ENCODE measurements at regions of chr17 and their contacts with region 1.

Region 1: DNA sequence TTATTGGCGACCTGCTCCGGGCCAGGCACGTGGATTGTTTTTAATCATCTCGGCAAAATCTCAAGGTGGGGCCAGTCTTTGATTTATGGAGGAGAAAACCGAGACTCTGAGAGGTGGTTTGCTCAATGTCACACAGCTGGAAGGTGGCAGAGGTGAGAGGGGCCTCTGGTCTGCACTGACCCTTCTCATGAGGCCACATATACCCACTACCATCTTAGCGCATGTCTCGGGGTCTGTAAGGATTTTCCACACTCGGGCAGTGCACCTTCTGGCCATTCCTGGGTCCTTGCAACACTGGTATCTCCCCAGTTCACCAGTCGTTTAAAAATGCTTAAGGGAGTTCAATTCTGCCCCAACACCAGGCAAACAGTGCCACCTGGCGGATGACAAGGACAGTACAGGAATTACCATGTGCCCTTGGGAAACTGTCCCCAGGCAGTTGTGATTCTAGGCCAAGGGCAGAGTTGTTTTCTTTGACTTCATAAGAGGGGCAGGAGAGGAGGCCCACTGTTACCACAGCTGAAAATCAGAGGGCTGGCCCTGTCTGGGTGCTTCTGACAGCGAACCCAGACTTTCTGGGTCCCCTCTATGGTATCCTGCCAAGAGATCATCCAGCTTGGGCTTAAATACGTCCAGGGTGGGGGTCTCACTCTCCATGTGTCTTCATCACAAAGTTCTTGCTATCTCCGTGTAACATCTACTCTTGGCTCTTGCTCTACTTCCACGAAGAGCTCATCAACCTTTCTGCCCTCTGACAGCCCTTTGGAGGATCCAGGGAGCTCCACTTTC is 39.4 kb upstream of the RAI1 start:
- DNase-seq: peak; percentile 49 to 84 (median 72)
- ATAC-seq: peak; percentile 91
- H3K4me3 ChIP-seq: no peak overlapping the region
- H3K4me3 Mint-ChIP-seq: no peak overlapping the region
- H3K27ac ChIP-seq: no peak overlapping the region
- H3K27ac Mint-ChIP-seq: peak overlapping the region in 1 of 9 donors; percentile 65
- H3K4me1 ChIP-seq: no peaks in the 10 kb centered on the region
- H3K4me1 Mint-ChIP-seq: peaks cover 0 to 5% (median 0%) of the 10 kb centered on the region in 7 donors
- H3K27me3 ChIP-seq: no peaks in the 10 kb centered on the region
- H3K27me3 Mint-ChIP-seq: peaks cover 0 to 2% (median 0%) of the 10 kb centered on the region in 5 donors

Region 2: GRCh38 chr17:17440010-17440843 is 201.6 kb before region 1 on chr17:
- CTCF ChIA-PET with region 1: interaction called, 6 read pairs
- POLR2A ChIA-PET with region 1: no interaction called
- intact Hi-C with region 1: loop called in 1 of 2 experiments (anchors 1 kb)
- DNase-seq: peak; percentile 49 to 79 (median 63)
- ATAC-seq: peak; percentile 79
- H3K4me3 ChIP-seq: no peak overlapping the region
- H3K4me3 Mint-ChIP-seq: no peak overlapping the region
- H3K27ac ChIP-seq: no peak overlapping the region
- H3K27ac Mint-ChIP-seq: peak overlapping the region in 2 of 9 donors; percentile 56 to 76
- H3K4me1 ChIP-seq: no peaks in the 10 kb centered on the region
- H3K4me1 Mint-ChIP-seq: peaks cover 0 to 9% (median 7%) of the 10 kb centered on the region in 7 donors
- H3K27me3 ChIP-seq: no peaks in the 10 kb centered on the region
- H3K27me3 Mint-ChIP-seq: no peaks in the 10 kb centered on the region

Region 3: DNA sequence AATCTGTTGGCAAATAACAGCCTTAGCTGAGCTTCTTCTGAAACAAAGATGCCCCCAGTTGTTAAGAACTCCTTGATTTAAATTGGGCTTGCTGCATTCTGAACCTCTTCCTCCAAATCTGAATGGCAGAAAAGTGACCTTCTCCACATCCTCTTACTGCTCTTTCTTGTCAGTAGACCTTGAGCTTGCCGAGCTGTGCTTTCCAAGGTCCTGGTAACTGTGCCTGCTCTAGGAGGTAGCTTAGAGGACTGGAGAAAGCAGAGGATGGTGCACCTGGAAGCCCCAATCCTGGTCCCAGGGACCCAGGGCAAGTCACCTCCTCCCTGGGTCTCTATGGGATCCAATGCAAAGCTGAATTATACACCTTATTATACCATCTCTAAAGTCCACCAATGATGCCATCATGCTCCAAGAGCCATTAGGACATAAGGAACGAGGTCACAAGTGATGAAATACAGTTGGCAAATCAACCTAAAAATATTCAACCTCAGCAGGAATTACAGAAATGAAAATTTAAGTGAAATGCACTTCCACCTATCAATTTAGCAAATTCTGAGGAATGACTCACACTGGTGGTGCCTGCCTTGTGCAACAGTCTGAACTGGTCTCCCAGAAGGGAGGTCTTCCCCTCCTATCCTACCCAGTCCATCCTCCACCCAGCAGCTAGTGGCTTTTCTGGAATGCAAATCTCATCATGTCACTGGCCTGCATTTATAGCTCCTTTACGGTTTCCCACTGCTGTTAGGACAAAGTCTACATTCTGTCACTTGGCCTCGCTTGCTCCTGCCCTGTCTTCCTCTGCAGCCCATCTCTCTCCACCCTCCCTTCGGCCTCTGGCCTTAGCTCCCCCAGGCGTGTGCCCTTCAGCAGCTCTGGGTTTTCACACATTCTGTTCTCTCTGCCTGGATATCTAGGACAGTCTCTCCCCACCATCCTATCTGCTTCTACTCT is 293.8 kb after region 1 on chr17:
- CTCF ChIA-PET with region 1: no interaction called
- POLR2A ChIA-PET with region 1: no interaction called
- intact Hi-C with region 1: no loop called
- DNase-seq: no peak
- ATAC-seq: peak; percentile 76
- H3K4me3 ChIP-seq: no peak overlapping the region
- H3K4me3 Mint-ChIP-seq: peak overlapping the region in 5 of 10 donors; percentile 1 to 52 (median 15)
- H3K27ac ChIP-seq: no peak overlapping the region
- H3K27ac Mint-ChIP-seq: peak overlapping the region in 3 of 9 donors; percentile 9 to 55 (median 47)
- H3K4me1 ChIP-seq: peaks cover 7 to 23% of the 10 kb centered on the region in 2 donors
- H3K4me1 Mint-ChIP-seq: peaks cover 33 to 79% (median 68%) of the 10 kb centered on the region in 7 donors
- H3K27me3 ChIP-seq: no peaks in the 10 kb centered on the region
- H3K27me3 Mint-ChIP-seq: no peaks in the 10 kb centered on the region

Measured in naive thymus-derived CD4-positive, alpha-beta T cell (primary cell).